MCF 10A (cell line): ENCODE measurements at regions of chr9 and their contacts with region 1.

Region 1: GRCh38 chr9:31776471-31776870 is 608.0 kb upstream of the ACO1 start:
- DNase-seq: peak; percentile 93
- H3K4me3 Mint-ChIP-seq: peak overlapping the region; percentile 8
- H3K27ac Mint-ChIP-seq: peak overlapping the region; percentile 1
- H3K4me1 Mint-ChIP-seq: peaks cover 28% of the 10 kb centered on the region
- H3K27me3 Mint-ChIP-seq: no peaks in the 10 kb centered on the region
- CTCF ChIP-seq: no peak

Region 2: GRCh38 chr9:31418419-31418818 is 358.1 kb before region 1 on chr9:
- CTCF ChIA-PET with region 1: interaction called, 3 read pairs
- POLR2A ChIA-PET with region 1: no interaction called
- intact Hi-C with region 1: loop called (anchors 10 kb)
- DNase-seq: no peak
- H3K4me3 Mint-ChIP-seq: no peak overlapping the region
- H3K27ac Mint-ChIP-seq: no peak overlapping the region
- H3K4me1 Mint-ChIP-seq: no peaks in the 10 kb centered on the region
- H3K27me3 Mint-ChIP-seq: no peaks in the 10 kb centered on the region
- CTCF ChIP-seq: no peak

Region 3: DNA sequence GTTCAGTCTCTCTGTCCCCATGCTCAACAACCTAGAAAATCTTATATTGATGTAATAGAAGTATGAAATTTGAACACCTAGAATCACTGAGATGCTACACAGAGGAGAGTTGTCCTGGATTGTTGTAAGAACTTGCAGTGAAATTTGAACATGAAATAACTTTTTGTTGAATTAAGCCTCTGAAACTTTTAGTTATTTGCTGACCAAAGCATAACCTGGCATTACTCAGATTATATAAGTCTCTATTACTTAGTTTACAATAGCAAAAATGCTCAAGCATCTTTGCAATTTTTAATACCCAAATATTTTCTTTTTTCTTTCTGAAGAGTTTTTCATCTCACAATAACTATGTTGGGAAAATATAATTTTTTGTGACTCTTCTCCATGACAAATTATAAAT is 22.7 kb before region 1 on chr9:
- CTCF ChIA-PET with region 1: no interaction called
- POLR2A ChIA-PET with region 1: no interaction called
- intact Hi-C with region 1: no loop called
- DNase-seq: no peak
- H3K4me3 Mint-ChIP-seq: no peak overlapping the region
- H3K27ac Mint-ChIP-seq: no peak overlapping the region
- H3K4me1 Mint-ChIP-seq: no peaks in the 10 kb centered on the region
- H3K27me3 Mint-ChIP-seq: no peaks in the 10 kb centered on the region
- CTCF ChIP-seq: no peak

Region 4: GRCh38 chr9:31790725-31791124 is 14.3 kb after region 1 on chr9:
- CTCF ChIA-PET with region 1: no interaction called
- POLR2A ChIA-PET with region 1: interaction called, 10 read pairs
- intact Hi-C with region 1: no loop called
- DNase-seq: peak; percentile 90
- H3K4me3 Mint-ChIP-seq: no peak overlapping the region
- H3K27ac Mint-ChIP-seq: no peak overlapping the region
- H3K4me1 Mint-ChIP-seq: peaks cover 13% of the 10 kb centered on the region
- H3K27me3 Mint-ChIP-seq: no peaks in the 10 kb centered on the region
- CTCF ChIP-seq: no peak

Region 5: DNA sequence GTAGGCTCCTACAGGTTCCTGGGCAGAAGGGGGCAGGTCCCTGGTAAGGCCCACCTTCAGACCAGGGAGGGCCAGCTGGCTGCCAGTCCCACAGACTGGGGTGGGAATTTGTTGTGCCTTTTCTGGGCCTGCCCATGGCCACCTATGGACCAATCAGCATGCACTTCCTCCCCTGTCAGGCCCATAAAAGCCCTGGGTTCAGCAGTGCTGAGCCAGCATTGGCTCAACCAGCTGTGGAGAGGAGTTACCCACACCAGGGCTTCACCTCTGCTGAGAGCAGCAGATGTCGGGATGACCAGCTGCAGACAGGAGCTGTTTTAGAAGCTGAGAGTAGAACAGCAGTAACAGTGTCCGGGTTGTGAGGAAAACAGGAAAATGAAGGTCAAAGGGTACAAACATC is 234.6 kb after region 1 on chr9:
- CTCF ChIA-PET with region 1: no interaction called
- POLR2A ChIA-PET with region 1: no interaction called
- intact Hi-C with region 1: no loop called
- DNase-seq: no peak
- H3K4me3 Mint-ChIP-seq: no peak overlapping the region
- H3K27ac Mint-ChIP-seq: no peak overlapping the region
- H3K4me1 Mint-ChIP-seq: no peaks in the 10 kb centered on the region
- H3K27me3 Mint-ChIP-seq: peaks cover 26% of the 10 kb centered on the region
- CTCF ChIP-seq: no peak